ENCODE measurements at regions of chr9 and their contacts with region 1.

Region 1: GRCh38 chr9:136631038-136632000 is 31.4 kb upstream of the EGFL7 start:
- DNase-seq: peak; percentile 80 to 83
- ATAC-seq: peak; percentile 87 to 93
- H3K4me3 ChIP-seq: no peak overlapping the region
- H3K27ac ChIP-seq: no peak overlapping the region
- H3K4me1 ChIP-seq: peaks cover 10% of the 10 kb centered on the region
- CTCF ChIP-seq: peak; percentile 92
- EP300 ChIP-seq: no peak
- POLR2A ChIP-seq: no peak
- RAD21 ChIP-seq: peak; percentile 97 to 99

Region 2: DNA sequence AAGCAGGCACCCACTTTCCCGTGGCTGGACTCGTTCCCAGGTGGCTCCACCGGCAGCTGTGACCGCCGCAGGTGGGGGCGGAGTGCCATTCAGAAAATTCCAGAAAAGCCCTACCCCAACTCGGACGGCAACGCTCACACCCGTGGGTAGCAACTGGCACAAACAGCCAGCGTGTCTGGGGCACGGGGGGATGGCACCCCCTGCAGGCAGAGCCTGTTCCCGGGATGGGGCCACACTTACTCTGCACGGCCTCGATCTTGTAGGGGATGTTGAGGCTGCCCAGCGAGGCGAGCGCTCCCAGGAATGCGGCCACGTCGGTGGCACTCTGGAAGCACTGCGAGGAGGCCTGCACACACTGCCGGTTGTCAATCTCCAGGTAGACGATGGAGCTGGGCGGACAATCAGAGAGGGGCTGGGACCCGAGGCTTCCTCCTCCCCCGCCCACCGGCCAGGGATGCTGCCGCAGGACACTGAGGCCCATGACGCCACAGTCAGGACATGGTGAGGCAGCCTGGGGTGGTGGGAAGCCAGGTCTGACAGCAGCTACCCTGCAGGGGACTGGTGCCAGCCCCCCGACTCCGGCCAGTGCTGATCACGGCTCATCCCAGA is 128.3 kb before region 1 on chr9:
- CTCF ChIA-PET with region 1: interaction called, 68 read pairs
- POLR2A ChIA-PET with region 1: no interaction called
- DNase-seq: no peak
- ATAC-seq: peak in 1 of 2 experiments; percentile 25; a peak in 3 of 6 replicates
- H3K4me3 ChIP-seq: no peak overlapping the region
- H3K27ac ChIP-seq: no peak overlapping the region
- H3K4me1 ChIP-seq: peaks cover 5% of the 10 kb centered on the region; the same call in 1 of the 3 replicates
- CTCF ChIP-seq: no peak
- EP300 ChIP-seq: no peak
- POLR2A ChIP-seq: no peak
- RAD21 ChIP-seq: 0 out of 5 replicates have a peak, but pooled peaks of 1 of the 2 experiments have one; percentile 8

Region 3: DNA sequence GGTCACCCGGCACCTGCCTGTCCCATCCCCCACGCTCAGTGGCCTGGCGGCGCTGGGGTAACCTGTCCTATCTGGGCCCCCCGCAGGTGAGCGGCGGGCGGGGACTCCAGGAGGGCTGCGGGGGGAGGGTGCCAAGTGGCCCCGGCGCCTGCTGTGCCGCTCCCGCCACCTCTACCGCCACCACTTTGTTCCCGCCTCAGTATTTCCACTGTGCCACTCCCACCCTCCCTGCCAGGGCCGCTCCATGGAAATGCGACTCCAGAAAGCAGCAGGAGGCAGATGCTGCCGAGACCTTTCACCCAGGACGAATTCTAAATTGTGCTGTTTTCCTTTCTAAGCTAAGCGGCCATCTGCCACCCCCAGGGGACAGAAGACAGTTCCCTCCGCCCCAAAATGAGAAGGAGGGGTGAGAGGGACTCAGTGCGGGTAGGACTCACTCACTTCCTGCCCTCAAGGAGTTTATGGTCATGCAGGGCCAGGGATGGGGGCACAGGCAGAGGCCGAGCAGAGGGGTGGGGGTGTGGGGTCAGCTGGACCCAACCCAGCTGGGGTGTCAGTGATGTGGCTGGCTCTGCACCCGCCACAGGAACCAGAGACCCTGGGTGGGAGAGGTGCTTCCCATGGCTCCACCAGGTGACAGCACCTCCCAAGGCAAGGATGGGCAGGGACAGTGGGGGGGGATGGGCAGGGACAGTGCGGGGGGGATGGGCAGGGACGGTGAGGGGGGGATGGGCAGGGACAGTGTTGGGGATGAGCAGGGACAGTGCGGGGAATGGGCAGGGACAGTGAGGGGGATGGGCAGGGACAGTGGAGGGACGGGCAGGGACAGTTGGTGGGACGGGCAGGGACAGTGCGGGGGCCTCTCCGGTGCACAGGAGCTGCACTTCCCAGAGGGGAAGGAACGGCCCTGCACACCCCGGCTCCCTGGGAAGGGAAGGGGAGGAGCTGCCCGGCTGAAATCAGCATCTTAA is 103.3 kb before region 1 on chr9:
- CTCF ChIA-PET with region 1: interaction called, 12 read pairs
- POLR2A ChIA-PET with region 1: no interaction called
- DNase-seq: peak; percentile 45 to 48
- ATAC-seq: peak; percentile 32 to 66; a peak in 5 of 6 replicates
- H3K4me3 ChIP-seq: no peak overlapping the region
- H3K27ac ChIP-seq: peak overlapping the region; percentile 62 to 83
- H3K4me1 ChIP-seq: peaks cover 42% of the 10 kb centered on the region
- CTCF ChIP-seq: no peak
- EP300 ChIP-seq: no peak
- POLR2A ChIP-seq: no peak
- RAD21 ChIP-seq: 0 out of 5 replicates have a peak, but pooled peaks of 1 of the 2 experiments have one; percentile 12

Region 4: DNA sequence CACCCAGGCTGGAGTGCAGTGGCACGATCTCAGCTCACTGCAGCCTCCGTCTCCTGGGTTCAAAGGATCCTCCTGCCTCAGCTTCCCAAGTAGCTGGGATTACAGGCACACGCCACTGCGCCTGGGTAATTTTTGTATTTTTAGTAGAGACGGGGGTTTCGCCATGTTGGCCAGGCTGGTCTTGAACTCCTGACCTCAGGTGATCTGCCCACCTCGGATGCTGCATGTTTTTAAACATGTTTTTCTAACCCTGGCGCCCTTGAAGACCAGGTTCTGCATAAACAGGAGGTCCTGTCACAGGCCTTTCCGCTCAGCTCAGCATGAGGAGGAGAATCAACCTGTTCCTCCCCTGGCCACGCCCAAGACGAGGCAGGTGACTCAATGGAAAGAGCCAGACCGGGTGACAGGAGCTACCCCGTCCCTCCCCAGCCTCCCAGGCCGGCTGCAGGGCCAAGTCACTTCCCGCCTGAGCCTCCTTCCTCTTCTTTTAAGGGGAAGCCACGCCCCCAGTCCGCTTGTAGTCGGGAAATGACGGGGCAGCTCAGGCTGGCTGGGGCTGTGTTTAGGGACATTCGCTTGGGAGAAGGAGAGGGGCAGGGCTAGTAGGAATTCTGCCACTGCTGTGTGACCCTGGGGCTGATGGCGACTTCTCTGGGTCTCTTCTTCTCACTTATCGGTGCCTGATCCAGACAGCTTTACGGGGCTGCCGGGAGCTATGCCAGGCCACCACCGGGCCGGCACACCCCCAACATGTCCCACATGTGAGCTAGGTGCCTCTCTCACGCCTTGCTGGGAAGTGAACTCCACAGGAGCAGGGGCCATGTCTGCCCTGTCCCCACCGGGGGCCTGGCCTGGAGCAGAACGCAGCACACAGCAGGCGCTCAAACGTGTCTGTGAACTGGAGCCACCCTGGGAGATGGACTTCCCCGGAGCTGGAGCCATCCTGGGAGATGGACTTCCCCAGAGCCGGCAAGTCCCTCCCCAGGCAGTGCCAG is 91.6 kb before region 1 on chr9:
- CTCF ChIA-PET with region 1: interaction called, 25 read pairs
- POLR2A ChIA-PET with region 1: no interaction called
- DNase-seq: no peak
- ATAC-seq: no peak
- H3K4me3 ChIP-seq: no peak overlapping the region
- H3K27ac ChIP-seq: no peak overlapping the region
- H3K4me1 ChIP-seq: peaks cover 16% of the 10 kb centered on the region; the same call in 2 of the 3 replicates
- CTCF ChIP-seq: no peak
- EP300 ChIP-seq: no peak
- POLR2A ChIP-seq: no peak
- RAD21 ChIP-seq: no peak

Region 5: DNA sequence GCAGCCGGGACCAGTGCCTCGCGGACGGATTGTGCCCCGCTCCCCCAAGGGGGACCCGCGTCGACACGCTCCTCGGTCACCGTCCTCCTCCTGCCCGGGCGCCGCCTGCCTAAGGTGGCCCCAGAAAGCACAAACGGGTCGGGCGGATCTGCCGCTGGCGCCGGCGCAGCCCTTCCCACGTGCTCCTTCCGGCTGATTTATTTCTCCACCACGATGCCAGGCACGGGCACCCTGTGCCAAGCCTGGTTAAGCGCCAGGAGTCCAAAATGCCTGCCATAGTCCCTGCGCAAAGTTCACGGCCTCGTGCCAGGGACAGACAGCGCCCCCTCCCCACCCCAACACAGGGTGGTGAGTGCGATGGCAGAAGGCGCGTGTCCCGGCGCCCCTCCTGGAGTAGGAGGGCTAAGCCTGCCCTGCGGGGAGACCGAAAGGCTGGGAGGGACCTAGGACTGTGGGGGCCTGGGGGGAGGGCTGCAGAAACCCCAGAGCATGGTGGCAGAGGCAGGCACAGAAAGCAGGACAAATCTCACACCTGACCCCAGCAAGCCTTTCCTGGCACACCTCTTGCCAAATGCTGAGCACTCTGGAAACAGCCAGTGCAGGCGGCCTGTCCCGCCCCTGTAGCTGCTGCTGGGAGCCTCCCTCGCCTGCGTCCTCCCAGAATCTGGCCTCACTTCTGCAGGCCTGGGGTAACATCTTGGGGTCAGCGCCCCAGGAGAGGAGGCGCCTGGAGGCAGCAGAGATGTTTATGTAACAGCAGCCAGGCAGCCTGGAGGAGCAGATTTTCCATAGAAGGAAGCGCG is 84.4 kb before region 1 on chr9:
- CTCF ChIA-PET with region 1: interaction called, 11 read pairs
- POLR2A ChIA-PET with region 1: no interaction called
- DNase-seq: peak in 1 of 2 experiments; percentile 57
- ATAC-seq: peak; percentile 27 to 51
- H3K4me3 ChIP-seq: peak overlapping the region; percentile 91
- H3K27ac ChIP-seq: peak overlapping the region; percentile 95 to 98
- H3K4me1 ChIP-seq: peaks cover 45% of the 10 kb centered on the region
- CTCF ChIP-seq: no peak
- EP300 ChIP-seq: no peak
- POLR2A ChIP-seq: 0 out of 2 replicates have a peak, but pooled peaks have one; percentile 21
- RAD21 ChIP-seq: no peak

Region 6: GRCh38 chr9:136644598-136645351 is 13.5 kb after region 1 on chr9:
- CTCF ChIA-PET with region 1: interaction called, 81 read pairs
- POLR2A ChIA-PET with region 1: no interaction called
- DNase-seq: peak in 1 of 2 experiments; percentile 88
- ATAC-seq: peak; percentile 83 to 96
- H3K4me3 ChIP-seq: peak overlapping the region; percentile 32; the same call in 2 of the 3 replicates
- H3K27ac ChIP-seq: peak overlapping the region; percentile 63 to 84; a peak in 5 of 6 replicates
- H3K4me1 ChIP-seq: peaks cover 12% of the 10 kb centered on the region
- CTCF ChIP-seq: peak; percentile 67
- EP300 ChIP-seq: no peak
- POLR2A ChIP-seq: no peak
- RAD21 ChIP-seq: peak; percentile 87 to 88